IMR-90 (cell line): ENCODE measurements at regions of chr10 and their contacts with region 1.

Region 1: DNA sequence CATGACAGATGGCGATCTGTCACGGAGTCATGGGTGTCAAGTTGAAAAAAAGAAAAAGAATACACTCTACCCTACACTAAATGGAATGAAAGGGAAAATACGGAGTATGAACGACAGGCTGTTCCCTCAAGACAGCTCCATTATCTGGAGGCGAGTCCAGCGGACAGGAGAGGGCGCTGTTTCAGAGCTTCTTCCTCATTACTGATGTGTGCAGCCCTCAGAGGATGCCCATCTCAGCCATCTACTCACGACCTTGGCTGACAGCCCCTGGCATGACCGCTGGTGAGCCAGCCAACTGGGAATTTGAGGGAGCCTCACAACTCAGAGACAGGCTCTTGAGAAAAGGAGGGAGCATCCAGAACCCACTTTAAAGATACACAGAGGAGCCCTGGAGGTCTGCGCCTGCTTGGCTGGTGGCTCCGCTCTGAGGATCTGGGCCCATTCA is 49.6 kb upstream of the SMNDC1 start:
- DNase-seq: peak; percentile 90
- ATAC-seq: peak; percentile 45
- H3K4me3 ChIP-seq: no peak overlapping the region; the same call in 1 of the 2 replicates
- H3K27ac ChIP-seq: peak overlapping the region; percentile 59
- H3K4me1 ChIP-seq: peaks cover 37% of the 10 kb centered on the region
- H3K27me3 ChIP-seq: no peaks in the 10 kb centered on the region
- CTCF ChIP-seq: peak; percentile 92
- POLR2A ChIP-seq: no peak; the same call in 1 of the 2 replicates
- RAD21 ChIP-seq: peak; percentile 86

Region 2: GRCh38 chr10:110304780-110305421 is 49.4 kb before region 1 on chr10 and contains the start of gene SMNDC1:
- CTCF ChIA-PET with region 1: interaction called, 4 read pairs
- POLR2A ChIA-PET with region 1: no interaction called
- dilution Hi-C with region 1: no loop called
- in situ Hi-C with region 1: no loop called
- intact Hi-C with region 1: loop called (anchors 1 kb)
- DNase-seq: peak; percentile 97
- ATAC-seq: peak; percentile 92
- H3K4me3 ChIP-seq: peak within 1 kb of the TSS; percentile 90
- H3K27ac ChIP-seq: peak within 1 kb of the TSS; percentile 76
- H3K4me1 ChIP-seq: peaks cover 4% of the 10 kb centered on the region; the same call in 1 of the 2 replicates
- H3K27me3 ChIP-seq: no peaks in the 10 kb centered on the region
- CTCF ChIP-seq: no peak
- POLR2A ChIP-seq: peak; percentile 81; the same call in 1 of the 2 replicates
- RAD21 ChIP-seq: no peak
- total RNA-seq, gene SMNDC1: 3.9 and 8.6 TPM in 2 replicates

Region 3: DNA sequence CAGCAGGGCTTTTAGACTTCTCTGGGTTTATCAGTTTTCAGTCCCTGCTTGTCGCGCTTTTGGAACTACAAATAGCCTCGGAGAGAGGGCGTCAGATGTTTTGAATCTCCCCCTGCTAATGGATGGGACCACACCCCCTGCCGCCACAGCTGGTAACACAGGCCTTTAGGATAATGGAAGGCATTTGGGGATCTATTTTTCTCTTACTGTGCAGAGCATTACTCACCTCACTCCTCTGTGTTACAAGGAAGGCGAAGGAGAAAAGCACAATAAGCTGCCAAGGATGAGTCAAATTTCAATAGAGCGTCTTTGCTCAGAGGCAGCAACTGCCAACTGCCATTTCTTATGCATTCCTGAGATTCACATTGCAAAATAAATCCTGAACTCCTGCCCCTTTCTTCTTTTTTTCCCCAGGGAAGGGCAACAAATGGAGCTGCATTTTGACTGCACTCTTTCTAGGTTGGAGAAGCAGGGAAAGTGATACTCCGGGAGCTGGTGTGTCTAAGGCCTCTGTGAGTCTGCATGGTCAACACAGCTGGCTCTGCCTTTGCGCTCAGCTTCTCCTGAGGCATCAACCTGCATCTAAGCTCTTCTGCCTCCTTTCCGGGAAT is 18.1 kb before region 1 on chr10:
- CTCF ChIA-PET with region 1: interaction called, 13 read pairs
- POLR2A ChIA-PET with region 1: no interaction called
- dilution Hi-C with region 1: no loop called
- in situ Hi-C with region 1: no loop called
- intact Hi-C with region 1: loop called (anchors 1 kb)
- DNase-seq: peak; percentile 98
- ATAC-seq: peak; percentile 93
- H3K4me3 ChIP-seq: no peak overlapping the region
- H3K27ac ChIP-seq: peak overlapping the region; percentile 83
- H3K4me1 ChIP-seq: peaks cover 9% of the 10 kb centered on the region
- H3K27me3 ChIP-seq: no peaks in the 10 kb centered on the region
- CTCF ChIP-seq: peak; percentile 17; the same call in 1 of the 2 replicates
- POLR2A ChIP-seq: no peak
- RAD21 ChIP-seq: no peak

Region 4: DNA sequence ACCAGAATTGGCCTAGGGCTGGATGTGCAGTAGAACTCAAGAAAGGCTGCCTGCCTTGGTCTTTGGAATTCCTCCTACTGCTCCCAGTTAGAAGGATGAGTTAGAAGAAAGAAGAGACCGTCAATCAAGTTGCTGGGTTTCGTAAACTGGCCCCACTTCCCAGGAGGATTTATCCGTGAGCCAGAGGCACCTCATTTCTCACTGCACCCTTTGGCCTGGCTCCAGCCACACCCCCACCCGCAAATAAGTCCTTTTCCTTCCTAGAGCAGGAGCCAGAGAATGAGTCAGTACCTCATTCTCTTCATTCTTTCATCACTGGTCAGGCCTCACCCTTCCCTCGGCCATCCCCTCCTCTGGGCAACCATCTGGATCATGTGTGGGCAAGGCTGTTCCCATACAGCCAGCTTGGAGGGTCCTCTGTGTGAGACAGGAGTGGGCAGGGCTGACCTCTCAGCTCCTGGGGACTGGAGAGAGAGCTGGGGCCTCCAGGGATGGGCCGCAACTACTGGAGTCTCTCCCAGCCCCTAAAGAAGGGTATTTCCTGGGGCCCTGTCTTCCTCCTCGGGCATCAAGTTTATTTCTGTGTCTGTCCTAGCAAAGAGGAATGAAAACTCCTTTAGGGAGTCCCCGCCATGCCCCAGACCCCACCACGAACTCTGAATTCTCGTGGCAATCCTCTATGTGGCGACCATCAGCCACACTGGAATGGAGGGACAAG is 56.1 kb after region 1 on chr10:
- CTCF ChIA-PET with region 1: interaction called, 5 read pairs
- POLR2A ChIA-PET with region 1: no interaction called
- dilution Hi-C with region 1: no loop called
- in situ Hi-C with region 1: no loop called
- intact Hi-C with region 1: loop called (anchors 1 kb)
- DNase-seq: peak; percentile 98
- ATAC-seq: peak; percentile 79
- H3K4me3 ChIP-seq: no peak overlapping the region
- H3K27ac ChIP-seq: peak overlapping the region; percentile 93
- H3K4me1 ChIP-seq: peaks cover 32% of the 10 kb centered on the region
- H3K27me3 ChIP-seq: no peaks in the 10 kb centered on the region
- CTCF ChIP-seq: no peak
- POLR2A ChIP-seq: peak; percentile 63
- RAD21 ChIP-seq: peak; percentile 34

Region 5: GRCh38 chr10:110497438-110498086 is 143.2 kb after region 1 on chr10 and contains the start of gene DUSP5:
- CTCF ChIA-PET with region 1: interaction called, 8 read pairs
- POLR2A ChIA-PET with region 1: interaction called, 9 read pairs
- dilution Hi-C with region 1: no loop called
- in situ Hi-C with region 1: loop called (anchors 5 kb)
- intact Hi-C with region 1: loop called (anchors 1 kb)
- DNase-seq: peak; percentile 92
- ATAC-seq: peak; percentile 78
- H3K4me3 ChIP-seq: peak within 1 kb of the TSS; percentile 90
- H3K27ac ChIP-seq: peak within 1 kb of the TSS; percentile 86
- H3K4me1 ChIP-seq: peaks cover 20% of the 10 kb centered on the region
- H3K27me3 ChIP-seq: no peaks in the 10 kb centered on the region
- CTCF ChIP-seq: no peak; the same call in 1 of the 2 replicates
- POLR2A ChIP-seq: peak; percentile 99
- RAD21 ChIP-seq: peak; percentile 28
- total RNA-seq, gene DUSP5: 42.1 and 55.3 TPM in 2 replicates

Region 6: GRCh38 chr10:110567201-110568054 is 213.1 kb after region 1 on chr10 and contains the start of gene SMC3:
- CTCF ChIA-PET with region 1: interaction called, 3 read pairs
- POLR2A ChIA-PET with region 1: no interaction called
- dilution Hi-C with region 1: no loop called
- in situ Hi-C with region 1: no loop called
- intact Hi-C with region 1: loop called (anchors 5 kb)
- DNase-seq: peak; percentile 96
- ATAC-seq: peak; percentile 91
- H3K4me3 ChIP-seq: peak within 1 kb of the TSS; percentile 77
- H3K27ac ChIP-seq: peak within 1 kb of the TSS; percentile 87
- H3K4me1 ChIP-seq: peaks cover 5% of the 10 kb centered on the region
- H3K27me3 ChIP-seq: no peaks in the 10 kb centered on the region
- CTCF ChIP-seq: no peak
- POLR2A ChIP-seq: no peak; the same call in 1 of the 2 replicates
- RAD21 ChIP-seq: no peak
- total RNA-seq, gene SMC3: 15.2 and 30.0 TPM in 2 replicates